ENCODE measurements at regions of chr19 and their contacts with region 1.

Region 1: DNA sequence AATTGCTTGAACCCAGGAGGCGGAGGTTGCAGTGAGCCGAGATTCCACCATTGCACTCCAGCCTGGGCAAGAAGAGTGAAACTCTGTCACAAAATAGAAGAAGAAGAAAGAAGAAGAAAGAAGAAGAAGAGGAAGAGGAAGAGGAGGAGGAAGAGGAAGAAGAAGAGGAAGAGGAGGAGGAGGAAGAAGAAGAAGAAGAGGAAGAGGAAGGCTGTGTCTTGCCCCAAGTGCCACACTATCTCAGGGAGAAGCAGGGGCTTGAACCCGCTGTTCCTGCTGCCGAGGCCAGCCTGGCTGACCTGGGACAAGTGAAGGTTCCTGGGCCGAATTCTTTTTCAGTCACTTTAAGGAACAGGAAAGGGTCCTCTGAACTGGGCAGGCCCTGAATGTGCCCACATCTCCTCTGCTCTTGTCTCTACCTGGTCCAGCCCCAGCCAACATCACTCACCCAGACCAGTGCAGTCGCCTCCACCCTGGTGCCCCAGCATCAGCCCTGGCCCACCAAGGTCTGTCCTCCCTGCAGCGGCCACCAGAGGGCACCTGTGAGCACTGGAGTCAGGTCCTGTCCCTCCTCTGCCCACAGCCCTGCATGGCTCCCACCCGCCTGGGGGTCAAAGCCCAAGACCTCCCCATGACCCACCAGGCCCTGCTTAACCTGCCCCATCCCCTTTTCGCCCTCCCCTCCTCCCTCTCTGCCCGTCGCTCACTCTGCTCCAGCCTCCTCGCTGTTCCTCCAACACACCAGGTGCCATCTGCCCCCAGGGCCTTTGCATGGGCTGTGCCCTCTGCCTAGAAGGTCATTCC is 20.0 kb downstream of the TICAM1 start:
- DNase-seq: peak; percentile 88 to 96
- ATAC-seq: peak; percentile 74
- H3K4me3 ChIP-seq: no peak overlapping the region
- H3K27ac ChIP-seq: peak overlapping the region in 1 of 2 donors; percentile 74
- H3K4me1 ChIP-seq: peaks cover 0 to 1% of the 10 kb centered on the region in 2 donors
- H3K27me3 ChIP-seq: no peaks in the 10 kb centered on the region

Region 2: DNA sequence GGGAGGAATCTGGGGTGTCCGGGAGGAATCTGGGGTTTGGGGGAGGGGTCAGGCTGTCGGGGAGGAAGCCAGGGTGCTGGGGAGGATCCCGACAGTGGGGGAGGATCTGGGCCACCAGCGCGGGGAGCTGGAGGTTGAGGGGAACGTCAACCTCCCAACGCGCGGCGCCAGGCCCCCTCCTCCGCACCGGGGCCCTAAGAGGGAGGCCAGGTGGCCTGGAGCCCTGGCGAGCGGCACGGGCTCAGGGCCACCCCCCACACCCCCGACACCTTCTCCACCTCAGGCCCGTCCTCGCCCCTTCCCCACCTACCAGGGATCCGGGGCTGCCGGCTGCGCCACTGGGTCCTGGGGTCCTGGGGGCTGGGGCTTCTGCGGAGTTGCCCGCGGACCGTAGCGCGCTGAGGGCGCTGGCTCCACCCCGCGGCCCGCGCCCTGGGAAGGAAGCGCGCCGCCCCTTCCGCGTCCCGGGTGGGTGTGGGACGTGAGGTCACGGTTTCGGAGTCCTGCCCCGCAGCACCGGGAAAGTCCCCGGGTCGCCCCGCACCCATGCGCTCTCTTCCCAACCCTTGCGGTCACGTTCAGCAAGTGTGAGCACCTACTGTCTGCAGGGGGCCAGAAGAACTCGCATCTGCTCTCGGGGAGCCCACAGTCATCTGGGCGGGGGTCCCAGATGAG is 19.9 kb after region 1 on chr19 and contains the start of gene TICAM1:
- intact Hi-C with region 1: loop called in 1 of 2 experiments (anchors 2 kb)
- DNase-seq: peak; percentile 89 to 93
- ATAC-seq: peak; percentile 94
- H3K4me3 ChIP-seq: peak within 1 kb of the TSS; percentile 54 to 89
- H3K27ac ChIP-seq: peak within 1 kb of the TSS; percentile 48 to 80
- H3K4me1 ChIP-seq: no peaks in the 10 kb centered on the region
- H3K27me3 ChIP-seq: no peaks in the 10 kb centered on the region
- total RNA-seq, gene TICAM1: 14.0 to 18.5 TPM

Region 3: GRCh38 chr19:4851551-4852290 is 40.2 kb after region 1 on chr19:
- intact Hi-C with region 1: loop called (anchors 1 kb)
- DNase-seq: peak; percentile 79 to 93
- ATAC-seq: peak; percentile 87
- H3K4me3 ChIP-seq: no peak overlapping the region
- H3K27ac ChIP-seq: no peak overlapping the region
- H3K4me1 ChIP-seq: no peaks in the 10 kb centered on the region
- H3K27me3 ChIP-seq: no peaks in the 10 kb centered on the region

Region 4: GRCh38 chr19:4909897-4910593 is 98.5 kb after region 1 on chr19:
- intact Hi-C with region 1: loop called (anchors 2 to 5 kb)
- DNase-seq: peak; percentile 95 to 97
- ATAC-seq: peak; percentile 91
- H3K4me3 ChIP-seq: peak overlapping the region; percentile 68 to 79
- H3K27ac ChIP-seq: no peak overlapping the region
- H3K4me1 ChIP-seq: no peaks in the 10 kb centered on the region
- H3K27me3 ChIP-seq: no peaks in the 10 kb centered on the region

Measured in aorta (tissue), 5 donors.